K562 (cell line): ENCODE measurements at regions of chr22 and their contacts with region 1.

Region 1: DNA sequence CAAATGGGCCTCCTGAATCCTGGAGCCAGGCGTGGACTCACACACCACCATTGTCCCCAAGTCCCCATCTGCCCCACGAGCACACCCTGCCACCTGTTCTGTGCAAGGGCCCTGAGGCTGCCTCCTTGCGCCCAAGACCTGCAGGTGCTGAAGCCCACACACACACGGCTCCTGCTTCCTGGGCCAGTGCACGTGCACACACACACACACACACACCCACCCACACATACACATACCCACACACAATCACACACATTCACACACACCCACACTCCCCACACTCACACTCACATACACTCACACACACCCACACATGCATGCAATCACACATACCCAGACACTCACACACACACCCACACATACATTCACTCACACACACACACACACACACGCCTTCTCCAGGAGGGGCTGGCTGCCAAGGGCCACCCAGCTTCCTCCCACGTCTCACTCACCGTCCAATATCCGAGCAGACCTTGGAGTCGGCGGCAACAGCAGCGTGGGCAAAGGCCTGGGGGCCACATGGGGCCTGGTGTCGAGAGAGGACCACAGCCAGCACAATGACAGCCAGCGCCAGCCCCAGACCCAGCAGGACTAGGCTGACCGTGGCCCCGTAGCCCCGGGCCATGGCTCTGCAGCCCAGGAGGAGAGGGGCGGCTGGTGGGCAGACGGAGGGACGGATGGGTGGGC is 638 bp downstream of the GGT5 start:
- DNase-seq: peak in 3 of 4 experiments; percentile 1 to 2 (median 2)
- ATAC-seq: no peak
- H3K4me3 ChIP-seq: no peak overlapping the region
- H3K27ac ChIP-seq: no peak overlapping the region
- H3K4me1 ChIP-seq: peaks cover 0 to 29% of the 10 kb centered on the region in 2 experiments; a peak in 2 of 5 replicates
- H3K27me3 ChIP-seq: no peaks in the 10 kb centered on the region
- CTCF ChIP-seq: no peak
- EP300 ChIP-seq: no peak
- POLR2A ChIP-seq: no peak
- RAD21 ChIP-seq: no peak

Region 2: GRCh38 chr22:24189249-24190158 is 54.7 kb before region 1 on chr22:
- CTCF ChIA-PET with region 1: interaction called, 11 read pairs
- POLR2A ChIA-PET with region 1: no interaction called
- in situ Hi-C with region 1: no loop called
- intact Hi-C with region 1: loop called (anchors 2 kb)
- DNase-seq: peak; percentile 56 to 76 (median 68)
- ATAC-seq: peak; percentile 89
- H3K4me3 ChIP-seq: no peak overlapping the region
- H3K27ac ChIP-seq: no peak overlapping the region
- H3K4me1 ChIP-seq: peaks cover 0 to 28% of the 10 kb centered on the region in 2 experiments; a peak in 1 of 5 replicates
- H3K27me3 ChIP-seq: peaks cover 0 to 16% of the 10 kb centered on the region in 2 experiments; a peak in 2 of 5 replicates
- CTCF ChIP-seq: peak; percentile 81 to 85 (median 85)
- EP300 ChIP-seq: no peak
- POLR2A ChIP-seq: no peak
- RAD21 ChIP-seq: peak; percentile 67 to 84

Region 3: GRCh38 chr22:24198682-24199052 is 45.6 kb before region 1 on chr22:
- CTCF ChIA-PET with region 1: no interaction called
- POLR2A ChIA-PET with region 1: no interaction called
- in situ Hi-C with region 1: loop called (anchors 5 kb)
- intact Hi-C with region 1: no loop called
- DNase-seq: no peak
- ATAC-seq: no peak
- H3K4me3 ChIP-seq: no peak overlapping the region
- H3K27ac ChIP-seq: no peak overlapping the region
- H3K4me1 ChIP-seq: peaks cover 0 to 13% of the 10 kb centered on the region in 2 experiments; a peak in 2 of 5 replicates
- H3K27me3 ChIP-seq: no peaks in the 10 kb centered on the region
- CTCF ChIP-seq: no peak
- EP300 ChIP-seq: no peak
- POLR2A ChIP-seq: no peak
- RAD21 ChIP-seq: no peak